ENCODE measurements at regions of chr4 and their contacts with region 1.

Region 1: GRCh38 chr4:98143001-98143899 is at the start of gene STPG2:
- DNase-seq: peak; percentile 94
- H3K4me3 ChIP-seq: peak within 1 kb of the TSS; percentile 48
- H3K4me3 Mint-ChIP-seq: peak within 1 kb of the TSS; percentile 96
- H3K27ac Mint-ChIP-seq: peak within 1 kb of the TSS; percentile 95
- H3K4me1 ChIP-seq: peaks cover 5% of the 10 kb centered on the region; the same call in 1 of the 2 replicates
- H3K4me1 Mint-ChIP-seq: peaks cover 16% of the 10 kb centered on the region
- H3K27me3 ChIP-seq: no peaks in the 10 kb centered on the region
- H3K27me3 Mint-ChIP-seq: peaks cover under 1% of the 10 kb centered on the region
- CTCF ChIP-seq: peak; percentile 50 to 76
- total RNA-seq, gene STPG2: not detected in 2 replicates

Region 2: GRCh38 chr4:98113012-98113411 is 30.2 kb before region 1 on chr4:
- CTCF ChIA-PET with region 1: interaction called, 21 read pairs
- POLR2A ChIA-PET with region 1: no interaction called
- intact Hi-C with region 1: loop called (anchors 1 kb)
- DNase-seq: peak; percentile 37 to 44
- H3K4me3 ChIP-seq: no peak overlapping the region
- H3K4me3 Mint-ChIP-seq: no peak overlapping the region
- H3K27ac Mint-ChIP-seq: no peak overlapping the region
- H3K4me1 ChIP-seq: no peaks in the 10 kb centered on the region
- H3K4me1 Mint-ChIP-seq: no peaks in the 10 kb centered on the region
- H3K27me3 ChIP-seq: no peaks in the 10 kb centered on the region
- H3K27me3 Mint-ChIP-seq: peaks cover under 1% of the 10 kb centered on the region
- CTCF ChIP-seq: peak in 1 of 2 experiments; percentile 25

Region 3: DNA sequence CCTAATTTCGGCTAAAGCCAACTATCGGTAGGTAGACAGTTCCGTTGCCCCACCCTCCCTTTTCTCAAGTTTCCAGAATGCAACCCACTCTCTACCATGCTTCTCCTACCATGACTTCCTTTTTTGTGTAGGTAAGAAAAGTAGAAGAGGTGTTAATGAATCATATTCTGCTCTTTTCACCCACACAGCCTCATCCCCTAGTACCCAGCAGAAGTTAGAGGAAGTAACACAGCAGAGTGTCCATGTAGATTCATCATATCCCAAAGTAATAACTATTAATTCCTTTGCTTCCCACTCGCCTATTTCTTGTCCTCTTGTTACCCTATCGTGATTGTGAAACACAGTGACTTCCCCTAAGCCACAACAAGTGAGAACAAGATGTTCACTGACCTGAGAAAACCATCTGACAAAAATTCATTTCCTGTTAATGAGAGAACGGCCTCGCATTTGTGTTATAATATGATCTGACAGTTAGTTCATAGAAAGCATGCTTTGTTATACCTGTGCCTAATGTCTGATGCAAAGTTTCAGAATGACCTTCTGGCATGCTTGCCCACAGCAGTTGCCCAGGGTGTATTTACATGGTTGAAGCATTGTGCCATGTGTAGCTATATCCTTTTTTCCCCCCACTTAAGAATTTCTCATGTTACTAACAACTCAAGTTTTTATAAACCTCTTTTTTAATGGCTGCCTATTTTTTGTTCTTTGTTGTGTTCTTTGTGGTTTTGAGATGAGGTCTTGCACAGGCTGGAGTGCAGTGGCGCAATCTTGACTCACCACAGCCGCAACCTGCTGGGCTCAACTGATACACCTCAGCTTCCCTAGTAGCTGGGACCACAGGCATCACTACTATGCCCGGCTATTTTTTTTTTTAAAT is 303.5 kb after region 1 on chr4:
- CTCF ChIA-PET with region 1: no interaction called
- POLR2A ChIA-PET with region 1: no interaction called
- intact Hi-C with region 1: loop called (anchors 5 kb)
- DNase-seq: no peak
- H3K4me3 ChIP-seq: no peak overlapping the region
- H3K4me3 Mint-ChIP-seq: no peak overlapping the region
- H3K27ac Mint-ChIP-seq: no peak overlapping the region
- H3K4me1 ChIP-seq: peaks cover 12% of the 10 kb centered on the region
- H3K4me1 Mint-ChIP-seq: peaks cover 7% of the 10 kb centered on the region
- H3K27me3 ChIP-seq: no peaks in the 10 kb centered on the region
- H3K27me3 Mint-ChIP-seq: no peaks in the 10 kb centered on the region
- CTCF ChIP-seq: no peak